OCI-LY7 (cell line): ENCODE measurements at regions of chr7 and their contacts with region 1.

Region 1: DNA sequence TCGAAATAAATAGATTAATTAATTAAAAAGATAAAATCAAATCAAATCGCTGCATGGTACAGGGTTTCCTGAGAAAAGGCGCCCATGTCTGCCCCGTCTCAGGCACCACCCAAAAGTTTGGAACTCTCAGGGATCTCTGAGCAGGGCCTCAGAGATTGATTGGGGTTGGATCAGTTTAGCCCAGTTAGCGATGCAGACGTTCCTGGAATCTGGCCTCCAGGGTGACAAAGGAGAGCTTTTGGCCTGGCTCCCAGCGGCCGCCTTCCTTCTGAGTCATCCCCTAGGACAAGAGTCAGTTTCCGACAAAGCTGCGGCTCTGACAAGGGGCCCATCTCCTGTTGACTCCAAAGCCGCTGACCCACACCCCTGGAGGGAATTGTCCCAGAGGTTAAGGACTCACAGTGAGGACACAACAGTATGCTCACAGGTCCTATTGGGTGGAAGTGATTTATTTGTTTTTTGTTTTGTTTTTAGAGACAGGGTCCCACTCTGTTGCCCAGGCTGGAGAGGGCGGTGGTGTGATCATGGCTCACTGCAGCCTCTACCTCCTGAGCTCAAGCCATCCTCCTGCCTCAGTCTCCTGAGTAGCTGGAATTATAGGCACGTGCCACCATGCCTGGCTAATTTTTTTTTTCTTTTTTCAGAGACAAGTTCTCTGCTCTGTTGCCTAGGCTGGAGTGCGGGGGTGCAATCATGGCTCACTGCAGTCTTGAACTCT is 6.9 kb downstream of the ORAI2 start:
- DNase-seq: no peak
- H3K4me3 ChIP-seq: no peak overlapping the region
- H3K27ac ChIP-seq: peak overlapping the region; percentile 100
- H3K4me1 ChIP-seq: peaks cover 80% of the 10 kb centered on the region
- CTCF ChIP-seq: no peak

Region 2: DNA sequence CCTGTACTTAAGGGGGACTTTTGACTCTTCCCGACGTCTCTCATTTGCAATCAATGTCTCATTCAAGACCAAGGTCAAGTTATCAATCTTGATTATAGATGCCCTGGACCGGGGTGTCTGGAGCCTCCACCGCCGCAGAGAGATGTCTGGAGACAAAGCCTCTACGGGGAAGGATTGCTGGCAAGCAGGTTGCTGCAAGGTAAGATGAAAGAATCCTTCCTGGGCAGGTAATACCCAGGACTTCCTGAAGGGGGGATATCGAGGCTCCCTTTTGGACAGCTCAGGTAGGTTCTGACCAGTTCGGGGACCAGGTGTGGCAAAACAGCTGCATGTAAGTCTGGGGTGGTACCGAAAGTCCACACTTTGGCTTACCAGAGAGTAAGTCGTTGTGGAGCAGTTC is 635.3 kb before region 1 on chr7:
- CTCF ChIA-PET with region 1: no interaction called
- POLR2A ChIA-PET with region 1: no interaction called
- intact Hi-C with region 1: loop called (anchors 10 kb)
- DNase-seq: peak; percentile 72
- H3K4me3 ChIP-seq: peak overlapping the region; percentile 51
- H3K27ac ChIP-seq: peak overlapping the region; percentile 80
- H3K4me1 ChIP-seq: peaks cover 78% of the 10 kb centered on the region
- CTCF ChIP-seq: peak; percentile 71

Region 3: GRCh38 chr7:102169651-102170392 is 270.4 kb before region 1 on chr7:
- CTCF ChIA-PET with region 1: no interaction called
- POLR2A ChIA-PET with region 1: no interaction called
- intact Hi-C with region 1: no loop called
- DNase-seq: no peak
- H3K4me3 ChIP-seq: no peak overlapping the region
- H3K27ac ChIP-seq: no peak overlapping the region
- H3K4me1 ChIP-seq: no peaks in the 10 kb centered on the region
- CTCF ChIP-seq: no peak

Region 4: GRCh38 chr7:102281785-102282184 is 158.5 kb before region 1 on chr7:
- CTCF ChIA-PET with region 1: no interaction called
- POLR2A ChIA-PET with region 1: no interaction called
- intact Hi-C with region 1: no loop called
- DNase-seq: no peak
- H3K4me3 ChIP-seq: no peak overlapping the region
- H3K27ac ChIP-seq: no peak overlapping the region
- H3K4me1 ChIP-seq: peaks cover 66% of the 10 kb centered on the region
- CTCF ChIP-seq: no peak

Region 5: DNA sequence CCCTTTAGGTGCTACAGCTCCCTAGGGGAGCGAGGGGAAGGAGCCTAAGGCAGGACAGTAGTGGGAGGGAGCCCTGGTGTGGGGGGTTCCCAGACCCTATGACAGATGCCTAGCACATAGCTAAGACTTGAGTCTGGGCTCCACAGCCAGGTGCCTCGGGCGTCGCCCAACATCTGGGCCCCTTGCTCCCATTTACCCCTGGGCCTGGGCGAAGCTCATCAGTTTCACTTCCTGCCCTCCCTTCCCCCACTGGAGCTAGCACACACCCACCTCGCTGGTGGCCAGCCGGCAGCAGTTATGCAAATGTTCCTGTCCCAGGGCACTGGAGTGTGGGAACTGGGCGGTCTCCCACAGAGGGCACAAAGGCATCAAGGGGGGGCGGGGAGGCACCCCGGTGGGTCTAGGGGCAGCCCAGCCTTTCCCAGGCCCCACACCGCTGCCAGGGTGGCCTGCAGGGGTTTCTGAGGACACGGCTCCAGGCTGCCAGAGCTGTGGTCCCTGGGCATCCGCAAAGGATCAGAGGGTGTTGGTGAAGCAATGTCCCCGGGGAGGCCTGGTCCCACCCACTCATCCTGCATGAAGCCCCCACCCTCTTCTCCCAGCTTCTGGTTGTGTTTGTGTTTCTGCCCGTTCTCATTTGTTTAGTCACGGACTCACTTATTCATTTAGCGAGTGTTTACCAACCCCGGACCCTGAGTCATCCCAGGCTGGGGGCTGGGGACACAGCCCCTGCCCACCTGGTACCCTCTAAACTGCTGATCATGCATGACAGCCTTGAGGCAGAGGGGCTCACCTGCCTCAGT is 133.2 kb before region 1 on chr7:
- CTCF ChIA-PET with region 1: no interaction called
- POLR2A ChIA-PET with region 1: interaction called, 3 read pairs
- intact Hi-C with region 1: loop called (anchors 2 kb)
- DNase-seq: peak; percentile 98
- H3K4me3 ChIP-seq: peak overlapping the region; percentile 57
- H3K27ac ChIP-seq: peak overlapping the region; percentile 98
- H3K4me1 ChIP-seq: peaks cover 92% of the 10 kb centered on the region
- CTCF ChIP-seq: no peak

Region 6: DNA sequence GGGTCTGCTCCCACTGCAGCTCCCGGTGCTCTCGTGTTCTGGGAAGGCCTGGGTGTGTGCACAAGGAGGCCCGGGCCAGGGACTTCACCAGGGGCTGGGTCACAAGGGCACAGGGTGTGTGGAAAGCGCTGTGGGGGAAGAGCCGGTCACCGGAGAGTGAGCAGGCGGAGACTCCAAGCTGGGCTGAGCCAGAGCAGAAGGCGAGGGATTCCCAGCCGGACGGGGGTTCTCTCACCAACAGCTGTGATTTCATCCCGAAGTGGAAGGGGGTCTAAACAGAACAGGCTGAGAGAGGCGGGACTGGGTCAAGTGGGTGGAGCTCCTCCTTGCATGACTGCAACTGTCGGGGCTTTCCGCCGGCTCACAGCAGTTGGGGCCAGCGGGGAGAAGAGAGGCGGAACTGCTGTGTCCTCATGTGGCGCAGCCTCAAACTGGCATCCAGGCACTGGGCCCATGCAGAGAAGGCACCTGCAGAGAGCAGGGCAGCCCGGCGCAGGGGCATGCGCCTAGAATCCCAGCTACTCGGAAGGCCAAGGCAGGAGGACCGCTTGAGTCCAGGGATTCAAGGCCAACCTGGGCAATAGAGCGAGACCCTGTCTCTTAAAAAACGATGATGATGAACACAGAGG is 14.5 kb before region 1 on chr7:
- CTCF ChIA-PET with region 1: interaction called, 3 read pairs
- POLR2A ChIA-PET with region 1: interaction called, 66 read pairs
- intact Hi-C with region 1: loop called (anchors 1 kb)
- DNase-seq: peak; percentile 94
- H3K4me3 ChIP-seq: peak overlapping the region; percentile 52
- H3K27ac ChIP-seq: peak overlapping the region; percentile 97
- H3K4me1 ChIP-seq: peaks cover 96% of the 10 kb centered on the region
- CTCF ChIP-seq: no peak

Region 7: DNA sequence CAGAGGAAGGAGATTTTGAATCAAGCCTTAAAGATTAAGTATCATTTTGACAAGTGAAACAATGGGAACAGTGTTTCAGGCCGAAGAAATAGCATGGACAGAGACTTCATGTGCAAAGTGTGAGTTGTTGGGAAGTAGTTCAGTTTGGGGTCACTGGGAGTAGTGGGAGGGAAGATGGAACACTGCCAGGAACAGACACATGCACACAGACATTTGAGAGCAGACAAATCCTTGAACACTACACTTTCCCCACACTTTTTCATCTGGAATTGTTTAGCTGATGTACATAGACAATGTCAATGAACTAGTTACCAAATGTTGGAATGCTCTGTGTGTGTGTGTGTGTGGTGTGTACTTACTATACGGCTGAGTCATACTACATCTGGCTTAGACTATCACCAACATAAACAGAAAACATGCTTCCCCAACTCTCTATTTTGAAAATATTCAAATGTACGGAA is 420.1 kb after region 1 on chr7:
- CTCF ChIA-PET with region 1: no interaction called
- POLR2A ChIA-PET with region 1: no interaction called
- intact Hi-C with region 1: no loop called
- DNase-seq: no peak
- H3K4me3 ChIP-seq: no peak overlapping the region
- H3K27ac ChIP-seq: no peak overlapping the region
- H3K4me1 ChIP-seq: no peaks in the 10 kb centered on the region
- CTCF ChIP-seq: no peak